Heart left ventricle (tissue), 16 donors: ENCODE measurements at regions of chr4 and their contacts with region 1.

Region 1: GRCh38 chr4:140095694-140096482 is 58.1 kb downstream of the MAML3 start:
- DNase-seq: peak in 4 of 5 donors; percentile 52 to 69 (median 58)
- ATAC-seq: peak in 3 of 4 donors; percentile 41 to 72 (median 59)
- H3K4me3 ChIP-seq: peak overlapping the region in 7 of 12 donors; percentile 11 to 35 (median 16)
- H3K27ac ChIP-seq: peak overlapping the region; percentile 38 to 88 (median 82)
- H3K4me1 ChIP-seq: peaks cover 7 to 99% (median 74%) of the 10 kb centered on the region in 12 donors
- H3K27me3 ChIP-seq: no peaks in the 10 kb centered on the region
- CTCF ChIP-seq: no peak
- POLR2A ChIP-seq: peak in 1 of 2 donors; percentile 43

Region 2: DNA sequence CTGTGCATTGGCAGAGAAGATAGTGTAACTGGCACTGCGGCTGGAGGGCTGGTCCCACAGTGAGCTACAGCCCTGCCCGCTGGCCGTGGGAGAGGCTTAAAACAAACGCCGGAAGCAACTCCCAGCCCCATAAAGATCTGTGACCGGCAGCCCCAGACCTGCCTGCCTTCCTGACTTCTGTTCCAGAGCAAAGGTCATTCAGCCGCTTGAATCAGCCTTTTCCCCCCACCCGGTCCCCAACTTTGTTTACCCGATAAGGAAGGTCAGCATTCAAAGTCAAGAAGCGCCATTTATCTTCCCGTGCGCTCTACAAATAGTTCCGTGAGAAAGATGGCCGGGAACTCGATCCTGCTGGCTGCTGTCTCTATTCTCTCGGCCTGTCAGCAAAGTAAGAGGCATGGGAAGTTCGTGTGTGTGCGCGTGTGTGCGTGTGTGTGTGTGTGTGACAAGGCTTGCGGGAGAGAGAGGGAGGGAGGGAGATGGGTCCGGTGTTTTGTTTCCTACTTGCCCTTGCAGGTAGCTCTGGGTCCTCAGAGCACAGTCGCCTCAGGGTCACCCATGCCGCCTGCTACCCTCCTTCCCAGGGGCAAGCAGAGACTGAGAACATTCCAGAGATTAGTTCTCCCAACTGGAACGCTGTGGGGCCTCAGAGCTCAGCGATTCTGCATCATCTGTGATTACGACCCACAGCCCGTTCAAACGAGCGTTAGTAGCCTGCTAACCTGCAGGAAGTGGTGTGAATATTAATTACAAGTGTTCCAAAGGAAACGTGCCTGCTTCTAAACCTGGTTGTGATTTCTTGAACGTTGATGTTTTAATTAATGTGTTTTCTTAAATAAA is 430.0 kb before region 1 on chr4 and contains the start of gene MGST2:
- intact Hi-C with region 1: loop called in 1 of 10 experiments (anchors 10 kb)
- DNase-seq: peak; percentile 83 to 90 (median 89)
- ATAC-seq: peak; percentile 92 to 94 (median 93)
- H3K4me3 ChIP-seq: peak within 1 kb of the TSS; percentile 49 to 79 (median 58)
- H3K27ac ChIP-seq: peak within 1 kb of the TSS; percentile 76 to 95 (median 93)
- H3K4me1 ChIP-seq: peaks cover 3 to 61% (median 27%) of the 10 kb centered on the region in 12 donors
- H3K27me3 ChIP-seq: no peaks in the 10 kb centered on the region
- CTCF ChIP-seq: peak in 1 of 12 donors; percentile 7
- POLR2A ChIP-seq: peak in 1 of 2 donors; percentile 44
- total RNA-seq, gene MGST2: 94.7 to 122 (median 105) TPM

Region 3: GRCh38 chr4:140049024-140049848 is 46.7 kb before region 1 on chr4:
- intact Hi-C with region 1: loop called in 5 of 10 experiments (anchors 1 to 5 kb)
- DNase-seq: peak in 4 of 5 donors; percentile 54 to 63 (median 58)
- ATAC-seq: peak; percentile 55 to 88 (median 83)
- H3K4me3 ChIP-seq: peak overlapping the region; percentile 2 to 59 (median 42)
- H3K27ac ChIP-seq: peak overlapping the region in 11 of 12 donors; percentile 28 to 79 (median 53)
- H3K4me1 ChIP-seq: peaks cover 0 to 60% (median 28%) of the 10 kb centered on the region in 12 donors
- H3K27me3 ChIP-seq: no peaks in the 10 kb centered on the region
- CTCF ChIP-seq: peak in 5 of 12 donors; percentile 27 to 55 (median 39)
- POLR2A ChIP-seq: no peak

Region 4: GRCh38 chr4:140059159-140059558 is 36.7 kb before region 1 on chr4:
- intact Hi-C with region 1: loop called in 4 of 10 experiments (anchors 5 kb)
- DNase-seq: no peak
- ATAC-seq: no peak
- H3K4me3 ChIP-seq: no peak overlapping the region
- H3K27ac ChIP-seq: no peak overlapping the region
- H3K4me1 ChIP-seq: peaks cover 0 to 24% (median 7%) of the 10 kb centered on the region in 12 donors
- H3K27me3 ChIP-seq: no peaks in the 10 kb centered on the region
- CTCF ChIP-seq: no peak
- POLR2A ChIP-seq: no peak

Region 5: GRCh38 chr4:140208921-140209320 is 113.0 kb after region 1 on chr4:
- intact Hi-C with region 1: no loop called
- DNase-seq: no peak
- ATAC-seq: no peak
- H3K4me3 ChIP-seq: no peak overlapping the region
- H3K27ac ChIP-seq: no peak overlapping the region
- H3K4me1 ChIP-seq: no peaks in the 10 kb centered on the region
- H3K27me3 ChIP-seq: no peaks in the 10 kb centered on the region
- CTCF ChIP-seq: no peak
- POLR2A ChIP-seq: no peak

Region 6: DNA sequence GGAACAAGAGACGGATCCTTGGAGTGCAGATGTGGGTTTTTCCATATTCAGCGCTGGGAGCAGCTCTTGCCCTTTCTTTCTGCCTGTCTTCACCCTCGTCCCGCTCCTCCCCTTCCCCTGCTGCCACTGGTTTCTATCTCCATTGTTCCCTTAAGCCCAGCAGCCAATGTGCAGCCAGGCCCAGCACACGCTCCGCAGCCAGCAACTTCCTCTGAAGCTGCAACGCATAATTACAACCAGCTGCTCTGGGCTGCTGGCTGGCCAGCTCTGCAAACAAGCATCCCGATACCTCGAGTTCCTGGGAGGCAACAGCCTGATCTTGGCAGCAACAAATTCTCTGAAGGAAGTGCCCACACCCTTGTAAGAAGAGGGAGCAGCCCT is 141.7 kb after region 1 on chr4:
- intact Hi-C with region 1: loop called in 1 of 10 experiments (anchors 5 kb)
- DNase-seq: peak; percentile 66 to 89 (median 83)
- ATAC-seq: peak; percentile 83 to 86 (median 85)
- H3K4me3 ChIP-seq: peak overlapping the region in 10 of 12 donors; percentile 9 to 37 (median 30)
- H3K27ac ChIP-seq: peak overlapping the region; percentile 6 to 92 (median 86)
- H3K4me1 ChIP-seq: peaks cover 0 to 38% (median 26%) of the 10 kb centered on the region in 12 donors
- H3K27me3 ChIP-seq: no peaks in the 10 kb centered on the region
- CTCF ChIP-seq: no peak
- POLR2A ChIP-seq: no peak

Region 7: DNA sequence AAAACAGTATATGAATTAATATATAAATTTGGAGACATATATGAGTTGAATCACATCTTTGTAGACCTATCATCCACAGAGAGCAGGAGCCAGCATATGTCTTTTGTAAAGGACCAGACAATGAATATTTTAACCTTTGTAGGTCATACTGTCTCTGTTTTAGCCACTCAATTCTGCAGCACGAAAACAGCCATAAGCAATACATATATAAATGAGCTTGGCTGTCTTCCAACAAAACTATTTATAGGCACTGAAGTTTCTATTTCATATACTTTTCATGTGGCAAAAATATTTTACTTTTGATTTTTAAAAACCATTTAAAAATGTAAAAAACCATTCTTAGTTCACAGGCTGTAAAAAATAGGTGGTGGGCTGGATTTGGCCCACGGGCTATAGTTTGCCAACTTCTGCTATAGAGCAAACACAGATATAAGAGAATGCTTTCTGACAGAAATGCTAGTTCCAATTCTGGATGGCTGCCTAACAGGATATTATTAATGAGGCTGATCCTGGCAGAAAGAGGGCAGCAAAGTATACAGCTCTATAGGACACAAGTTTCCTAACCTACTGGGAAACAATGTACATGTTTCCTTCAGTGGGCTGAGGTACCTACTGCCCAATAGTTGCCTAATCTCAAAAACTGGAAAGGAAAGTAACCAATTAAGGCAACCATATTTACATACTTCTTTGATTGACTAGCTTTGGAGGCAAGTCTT is 530.9 kb after region 1 on chr4:
- intact Hi-C with region 1: no loop called
- DNase-seq: no peak
- ATAC-seq: no peak
- H3K4me3 ChIP-seq: no peak overlapping the region
- H3K27ac ChIP-seq: no peak overlapping the region
- H3K4me1 ChIP-seq: no peaks in the 10 kb centered on the region
- H3K27me3 ChIP-seq: no peaks in the 10 kb centered on the region
- CTCF ChIP-seq: peak in 1 of 12 donors; percentile 21
- POLR2A ChIP-seq: no peak